HepG2 (cell line): ENCODE measurements at regions of chr9 and their contacts with region 1.

Region 1: DNA sequence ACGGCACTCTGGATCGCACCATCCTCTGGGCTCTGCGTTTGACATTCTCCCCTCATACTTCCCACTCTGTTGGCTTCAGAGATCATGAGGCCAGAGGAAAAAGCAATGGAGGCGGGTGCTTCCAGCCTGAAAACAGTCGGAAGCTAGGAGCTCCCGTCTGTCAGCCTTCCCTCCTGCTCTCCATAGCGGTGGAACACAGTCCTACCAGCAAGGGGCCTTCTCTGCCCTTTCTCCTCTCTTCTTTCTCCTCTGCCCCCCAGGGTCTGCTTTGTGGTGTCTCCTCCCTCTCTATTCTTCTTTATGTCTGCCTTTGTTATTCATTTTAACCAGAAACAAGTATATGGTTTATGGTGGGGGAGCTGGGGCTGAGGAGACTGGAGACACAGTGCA is 152.5 kb upstream of the NFIB start:
- DNase-seq: no peak
- ATAC-seq: peak; percentile 46
- H3K4me3 ChIP-seq: no peak overlapping the region
- H3K27ac ChIP-seq: no peak overlapping the region
- H3K4me1 ChIP-seq: peaks cover 11% of the 10 kb centered on the region
- H3K27me3 ChIP-seq: peaks cover 0 to 10% of the 10 kb centered on the region in 2 experiments; a peak in 1 of 5 replicates
- CTCF ChIP-seq: no peak
- EP300 ChIP-seq: no peak
- POLR2A ChIP-seq: no peak
- RAD21 ChIP-seq: no peak

Region 2: DNA sequence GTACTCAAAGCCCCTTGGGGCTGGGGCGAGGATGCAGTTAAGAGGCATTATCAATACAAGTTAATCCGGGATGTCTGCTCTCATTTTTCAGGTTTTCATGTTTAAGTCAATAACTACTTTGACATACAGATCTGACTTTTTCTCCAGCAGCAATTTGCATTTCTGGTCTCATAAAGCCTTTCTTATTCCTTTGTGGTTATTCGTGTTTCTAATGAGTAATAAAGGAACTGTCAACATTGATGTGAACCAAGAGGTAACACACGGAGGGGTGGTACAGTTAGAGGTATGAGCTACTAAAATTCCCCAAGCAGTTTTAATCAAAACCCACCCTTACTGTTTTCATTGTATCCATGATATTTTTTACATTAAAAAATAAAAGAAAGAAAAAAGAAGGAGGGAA is 14.5 kb before region 1 on chr9:
- CTCF ChIA-PET with region 1: no interaction called
- POLR2A ChIA-PET with region 1: no interaction called
- in situ Hi-C with region 1: no loop called
- intact Hi-C with region 1: no loop called
- DNase-seq: no peak
- ATAC-seq: no peak
- H3K4me3 ChIP-seq: no peak overlapping the region
- H3K27ac ChIP-seq: no peak overlapping the region
- H3K4me1 ChIP-seq: no peaks in the 10 kb centered on the region
- H3K27me3 ChIP-seq: no peaks in the 10 kb centered on the region; a peak in 2 of 5 replicates
- CTCF ChIP-seq: no peak
- EP300 ChIP-seq: no peak
- POLR2A ChIP-seq: no peak
- RAD21 ChIP-seq: no peak

Region 3: DNA sequence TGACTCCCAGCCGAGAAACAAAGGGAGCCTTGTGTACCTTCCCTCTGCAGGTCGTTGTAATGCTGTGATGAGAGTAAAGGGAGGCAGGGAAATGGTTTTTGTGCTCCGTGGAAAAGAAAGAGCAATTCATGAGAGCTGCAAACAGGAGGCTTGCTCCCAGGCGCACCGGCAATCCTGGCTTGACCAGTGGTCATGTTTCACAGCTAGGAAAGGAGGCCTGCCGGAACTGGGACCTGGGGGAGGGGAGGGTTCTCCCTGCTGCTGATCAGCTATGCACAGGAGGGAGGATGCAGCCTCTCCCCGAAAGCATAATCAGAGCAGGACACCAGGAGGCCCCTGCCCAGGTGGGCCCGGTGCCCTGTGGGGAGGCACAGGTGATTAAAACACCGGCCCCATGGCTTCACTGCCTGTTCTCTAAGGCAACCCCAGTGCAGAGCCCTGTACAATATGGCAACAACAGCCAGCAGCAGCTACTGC is 95.5 kb after region 1 on chr9:
- CTCF ChIA-PET with region 1: no interaction called
- POLR2A ChIA-PET with region 1: no interaction called
- in situ Hi-C with region 1: no loop called
- intact Hi-C with region 1: loop called (anchors 10 kb)
- DNase-seq: peak; percentile 81
- ATAC-seq: peak; percentile 94
- H3K4me3 ChIP-seq: peak overlapping the region; percentile 38 to 59 (median 46)
- H3K27ac ChIP-seq: peak overlapping the region; percentile 49
- H3K4me1 ChIP-seq: peaks cover 64% of the 10 kb centered on the region
- H3K27me3 ChIP-seq: no peaks in the 10 kb centered on the region
- CTCF ChIP-seq: no peak
- EP300 ChIP-seq: no peak
- POLR2A ChIP-seq: no peak
- RAD21 ChIP-seq: no peak

Region 4: GRCh38 chr9:14652729-14653377 is 186.4 kb after region 1 on chr9:
- CTCF ChIA-PET with region 1: interaction called, 9 read pairs
- POLR2A ChIA-PET with region 1: no interaction called
- in situ Hi-C with region 1: loop called (anchors 10 kb)
- intact Hi-C with region 1: loop called (anchors 2 kb)
- DNase-seq: peak; percentile 70
- ATAC-seq: peak; percentile 86
- H3K4me3 ChIP-seq: no peak overlapping the region
- H3K27ac ChIP-seq: no peak overlapping the region
- H3K4me1 ChIP-seq: no peaks in the 10 kb centered on the region
- H3K27me3 ChIP-seq: no peaks in the 10 kb centered on the region
- CTCF ChIP-seq: peak; percentile 76
- EP300 ChIP-seq: no peak
- POLR2A ChIP-seq: no peak
- RAD21 ChIP-seq: 0 out of 2 replicates have a peak, but pooled peaks have one; percentile 18

Region 5: DNA sequence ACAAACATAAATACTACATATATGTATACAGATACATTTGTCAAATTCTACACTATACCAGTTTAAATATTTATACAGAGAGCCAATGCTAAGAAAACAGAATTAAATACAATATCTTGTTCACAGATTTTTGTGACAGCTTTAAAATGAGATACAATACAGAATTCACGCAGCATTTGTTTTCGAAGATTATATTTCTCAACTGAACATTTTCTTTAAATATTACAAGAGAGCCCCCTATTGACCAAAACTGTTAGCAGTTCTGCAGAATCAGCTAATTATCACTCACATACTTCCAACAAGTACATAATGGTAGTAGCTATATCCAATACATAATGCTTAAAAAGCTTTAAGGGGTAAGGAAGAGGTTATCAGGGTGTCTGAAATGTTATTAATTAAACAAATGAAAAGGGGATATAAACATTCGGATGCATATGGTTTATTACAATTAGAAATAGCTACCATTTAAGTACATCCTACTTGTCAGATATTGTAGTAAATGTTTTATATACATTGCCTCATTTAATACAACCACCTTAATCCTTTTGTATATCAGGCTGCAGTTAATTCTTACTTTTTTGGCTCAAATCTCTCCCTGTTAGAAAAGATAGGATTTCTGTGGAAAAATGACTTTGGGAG is 195.1 kb after region 1 on chr9:
- CTCF ChIA-PET with region 1: interaction called, 5 read pairs
- POLR2A ChIA-PET with region 1: no interaction called
- in situ Hi-C with region 1: loop called (anchors 10 kb)
- intact Hi-C with region 1: loop called (anchors 1 kb)
- DNase-seq: peak; percentile 27
- ATAC-seq: peak; percentile 47; the same call in 2 of the 3 replicates
- H3K4me3 ChIP-seq: no peak overlapping the region
- H3K27ac ChIP-seq: no peak overlapping the region
- H3K4me1 ChIP-seq: no peaks in the 10 kb centered on the region
- H3K27me3 ChIP-seq: no peaks in the 10 kb centered on the region
- CTCF ChIP-seq: peak; percentile 51
- EP300 ChIP-seq: no peak
- POLR2A ChIP-seq: no peak
- RAD21 ChIP-seq: no peak

Region 6: DNA sequence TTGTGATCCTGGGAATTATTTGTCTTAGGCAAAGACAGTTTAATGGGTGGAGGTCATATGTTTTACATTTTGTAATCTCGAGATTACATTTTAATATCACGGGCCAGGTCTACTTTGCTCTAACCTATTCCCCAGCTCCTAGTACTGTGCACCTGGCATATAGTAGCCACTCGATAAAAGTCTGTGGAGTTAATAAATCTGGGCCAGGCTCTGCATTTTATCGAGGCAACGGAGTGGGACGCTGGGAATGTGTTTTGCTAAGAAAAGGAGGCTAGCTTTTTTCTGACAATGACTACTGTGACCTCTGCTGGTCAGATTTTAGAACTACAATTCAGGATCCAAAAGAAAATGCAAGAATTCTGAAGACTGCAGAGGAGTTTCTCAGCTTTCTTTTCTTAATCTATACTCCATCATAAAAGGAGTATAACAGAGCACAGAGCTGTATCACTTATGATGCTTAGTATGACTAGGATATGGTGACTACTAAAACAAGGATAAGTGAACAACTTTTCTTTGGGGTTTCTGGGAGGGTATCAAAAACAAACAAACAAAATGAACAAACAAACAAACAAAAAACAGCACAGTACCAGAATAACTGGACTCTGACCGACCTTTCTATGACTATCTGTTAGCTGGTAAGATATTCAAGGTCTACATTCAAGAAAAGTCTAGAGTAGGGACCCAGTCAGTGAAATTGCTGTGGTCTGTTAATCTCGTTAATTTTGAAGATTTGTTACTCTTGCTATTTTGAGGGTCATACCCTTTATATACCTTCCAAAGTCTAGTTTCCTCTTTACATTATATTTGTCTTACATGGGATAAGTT is 302.2 kb after region 1 on chr9:
- CTCF ChIA-PET with region 1: interaction called, 3 read pairs
- POLR2A ChIA-PET with region 1: no interaction called
- in situ Hi-C with region 1: loop called (anchors 10 kb)
- intact Hi-C with region 1: loop called (anchors 1 kb)
- DNase-seq: peak; percentile 34
- ATAC-seq: no peak; the same call in none of the 3 replicates
- H3K4me3 ChIP-seq: no peak overlapping the region
- H3K27ac ChIP-seq: no peak overlapping the region
- H3K4me1 ChIP-seq: no peaks in the 10 kb centered on the region
- H3K27me3 ChIP-seq: no peaks in the 10 kb centered on the region
- CTCF ChIP-seq: peak; percentile 51
- EP300 ChIP-seq: no peak
- POLR2A ChIP-seq: no peak
- RAD21 ChIP-seq: no peak